ENCODE measurements at regions of chr12 and their contacts with region 1.

Region 1: DNA sequence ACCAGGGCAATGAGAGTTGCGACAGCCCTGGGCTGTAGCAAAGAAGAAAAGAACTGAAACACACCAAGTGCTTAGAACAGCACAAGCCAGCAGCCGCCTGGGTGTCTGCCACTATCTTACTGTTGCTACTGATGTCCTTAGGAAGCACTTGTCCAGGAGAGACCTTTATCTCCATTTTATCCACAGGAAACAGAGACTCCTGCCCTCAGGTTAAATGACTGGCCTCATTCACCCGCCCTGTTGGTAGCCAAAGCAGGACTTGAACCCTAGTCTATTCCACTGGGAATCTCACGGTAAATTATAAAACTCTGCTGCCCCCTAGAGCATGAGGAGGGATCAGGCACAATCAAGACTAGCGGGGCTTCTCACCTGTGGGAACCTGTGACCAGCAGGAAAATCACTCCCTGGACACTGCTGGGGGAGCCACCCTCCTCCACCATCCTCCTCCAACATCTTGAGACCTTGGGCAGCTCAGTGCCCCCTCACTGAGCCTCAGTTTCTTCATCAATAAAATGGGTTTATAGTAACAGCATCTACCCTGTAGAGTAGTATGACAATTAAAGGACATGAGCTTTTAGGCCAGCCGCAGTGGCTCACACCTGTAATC is 20.5 kb upstream of the TESC start:
- DNase-seq: peak; percentile 56 to 72
- ATAC-seq: peak; percentile 72 to 86
- H3K4me3 ChIP-seq: no peak overlapping the region
- H3K27ac ChIP-seq: peak overlapping the region in 1 of 2 experiments; percentile 78; a peak in 3 of 6 replicates
- H3K4me1 ChIP-seq: peaks cover 40% of the 10 kb centered on the region
- CTCF ChIP-seq: peak; percentile 79
- EP300 ChIP-seq: no peak
- POLR2A ChIP-seq: no peak
- RAD21 ChIP-seq: peak; percentile 79 to 89

Region 2: DNA sequence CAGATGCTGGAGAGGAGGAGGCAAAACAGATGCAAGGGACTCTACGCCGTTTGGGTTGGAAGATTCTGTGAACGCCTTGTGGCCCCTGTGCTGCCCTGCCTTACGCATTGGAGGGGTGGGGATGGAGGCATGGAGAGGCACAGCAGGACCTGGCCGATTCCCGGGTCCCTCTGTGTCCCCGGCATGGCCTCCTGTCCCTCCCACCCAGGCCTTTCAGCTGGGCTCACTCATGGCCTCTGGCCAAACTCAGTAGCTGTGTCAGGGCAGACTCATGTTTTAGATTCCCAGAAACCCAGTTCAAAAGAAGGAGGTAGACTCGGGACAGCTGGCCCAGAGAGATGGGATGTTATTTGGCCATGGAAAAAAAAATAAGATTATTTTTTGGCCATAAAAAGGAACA is 60.5 kb before region 1 on chr12:
- CTCF ChIA-PET with region 1: interaction called, 10 read pairs
- POLR2A ChIA-PET with region 1: no interaction called
- DNase-seq: no peak
- ATAC-seq: no peak
- H3K4me3 ChIP-seq: no peak overlapping the region
- H3K27ac ChIP-seq: no peak overlapping the region
- H3K4me1 ChIP-seq: no peaks in the 10 kb centered on the region
- CTCF ChIP-seq: no peak
- EP300 ChIP-seq: no peak
- POLR2A ChIP-seq: no peak
- RAD21 ChIP-seq: no peak

Region 3: GRCh38 chr12:117100251-117100650 is 19.4 kb before region 1 on chr12:
- CTCF ChIA-PET with region 1: interaction called, 33 read pairs
- POLR2A ChIA-PET with region 1: no interaction called
- DNase-seq: peak; percentile 63 to 73
- ATAC-seq: peak; percentile 73 to 78
- H3K4me3 ChIP-seq: no peak overlapping the region
- H3K27ac ChIP-seq: peak overlapping the region; percentile 41 to 94; a peak in 4 of 6 replicates
- H3K4me1 ChIP-seq: peaks cover 26% of the 10 kb centered on the region; the same call in 2 of the 3 replicates
- CTCF ChIP-seq: peak; percentile 41; the same call in 2 of the 3 replicates
- EP300 ChIP-seq: no peak
- POLR2A ChIP-seq: no peak
- RAD21 ChIP-seq: peak; percentile 14 to 29; a peak in 2 of 5 replicates

Region 4: GRCh38 chr12:117130801-117131200 is 11.1 kb after region 1 on chr12:
- CTCF ChIA-PET with region 1: interaction called, 35 read pairs
- POLR2A ChIA-PET with region 1: interaction called, 3 read pairs
- DNase-seq: no peak
- ATAC-seq: peak; percentile 35 to 47; a peak in 3 of 6 replicates
- H3K4me3 ChIP-seq: no peak overlapping the region
- H3K27ac ChIP-seq: peak overlapping the region; percentile 41 to 81; a peak in 5 of 6 replicates
- H3K4me1 ChIP-seq: peaks cover 28% of the 10 kb centered on the region
- CTCF ChIP-seq: no peak
- EP300 ChIP-seq: no peak
- POLR2A ChIP-seq: no peak
- RAD21 ChIP-seq: no peak

Measured in A549 (cell line).